BJ (cell line): ENCODE measurements at regions of chr17 and their contacts with region 1.

Region 1: GRCh38 chr17:66255112-66255511 is 25.9 kb upstream of the APOH start:
- DNase-seq: no peak
- H3K4me3 ChIP-seq: no peak overlapping the region
- H3K27me3 ChIP-seq: no peaks in the 10 kb centered on the region
- CTCF ChIP-seq: peak; percentile 70

Region 2: GRCh38 chr17:66673668-66674315 is 418.7 kb after region 1 on chr17:
- CTCF ChIA-PET with region 1: interaction called, 12 read pairs
- POLR2A ChIA-PET with region 1: no interaction called
- DNase-seq: no peak
- H3K4me3 ChIP-seq: no peak overlapping the region
- H3K27me3 ChIP-seq: no peaks in the 10 kb centered on the region
- CTCF ChIP-seq: peak; percentile 79